HEK293 (cell line): ENCODE measurements at regions of chr9 and their contacts with region 1.

Region 1: GRCh38 chr9:13956107-13956506 is 357.8 kb downstream of the NFIB start:
- H3K4me3 ChIP-seq: no peak overlapping the region
- H3K27ac ChIP-seq: peak overlapping the region; percentile 57; the same call in 1 of the 2 replicates
- H3K4me1 ChIP-seq: peaks cover 24% of the 10 kb centered on the region
- CTCF ChIP-seq: peak; percentile 38; the same call in 1 of the 2 replicates

Region 2: GRCh38 chr9:13750061-13750460 is 206.0 kb before region 1 on chr9:
- CTCF ChIA-PET with region 1: no interaction called
- POLR2A ChIA-PET with region 1: no interaction called
- H3K4me3 ChIP-seq: no peak overlapping the region
- H3K27ac ChIP-seq: no peak overlapping the region
- H3K4me1 ChIP-seq: no peaks in the 10 kb centered on the region
- CTCF ChIP-seq: no peak

Region 3: DNA sequence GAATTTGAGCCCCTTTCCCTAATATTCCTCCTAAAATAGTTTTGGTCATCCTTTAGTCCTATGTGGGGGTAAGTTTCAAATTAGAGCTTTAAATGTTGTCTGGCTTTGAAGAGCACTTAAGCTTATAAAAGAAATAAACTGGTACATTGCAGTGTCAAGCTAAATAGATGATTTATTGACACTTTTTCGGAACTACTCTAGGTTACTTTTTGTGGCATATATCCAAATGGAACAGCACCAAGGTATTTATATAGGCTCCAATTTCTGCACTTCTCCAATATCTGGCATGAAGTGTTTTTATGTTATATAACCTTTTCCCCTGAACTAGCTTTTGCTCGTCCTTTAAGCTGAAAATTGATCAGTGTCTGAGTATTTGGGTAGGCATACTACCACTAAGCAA is 44.6 kb before region 1 on chr9:
- CTCF ChIA-PET with region 1: no interaction called
- POLR2A ChIA-PET with region 1: no interaction called
- H3K4me3 ChIP-seq: no peak overlapping the region
- H3K27ac ChIP-seq: no peak overlapping the region; the same call in 1 of the 2 replicates
- H3K4me1 ChIP-seq: peaks cover 10% of the 10 kb centered on the region
- CTCF ChIP-seq: no peak

Region 4: GRCh38 chr9:13967011-13967410 is 10.9 kb after region 1 on chr9:
- CTCF ChIA-PET with region 1: interaction called, 3 read pairs
- POLR2A ChIA-PET with region 1: interaction called, 11 read pairs
- H3K4me3 ChIP-seq: no peak overlapping the region
- H3K27ac ChIP-seq: no peak overlapping the region; the same call in 1 of the 2 replicates
- H3K4me1 ChIP-seq: peaks cover 15% of the 10 kb centered on the region
- CTCF ChIP-seq: no peak